Ovary (tissue), 10 donors: ENCODE measurements at regions of chr9 and their contacts with region 1.

Region 1: GRCh38 chr9:99184475-99185347 is 37.0 kb downstream of the ALG2 start:
- DNase-seq: peak; percentile 76 to 89 (median 88)
- H3K4me3 ChIP-seq: peak overlapping the region; percentile 21
- H3K27ac ChIP-seq: no peak overlapping the region
- H3K4me1 ChIP-seq: peaks cover 3% of the 10 kb centered on the region
- H3K27me3 ChIP-seq: no peaks in the 10 kb centered on the region
- CTCF ChIP-seq: peak; percentile 81 to 91 (median 83)
- EP300 ChIP-seq: no peak
- POLR2A ChIP-seq: no peak

Region 2: GRCh38 chr9:99109522-99109921 is 75.2 kb before region 1 on chr9:
- intact Hi-C with region 1: no loop called
- DNase-seq: no peak
- H3K4me3 ChIP-seq: no peak overlapping the region
- H3K27ac ChIP-seq: no peak overlapping the region
- H3K4me1 ChIP-seq: peaks cover 11% of the 10 kb centered on the region
- H3K27me3 ChIP-seq: no peaks in the 10 kb centered on the region
- CTCF ChIP-seq: no peak
- EP300 ChIP-seq: no peak
- POLR2A ChIP-seq: no peak

Region 3: GRCh38 chr9:100322954-100323536 is 1138.3 kb after region 1 on chr9:
- intact Hi-C with region 1: loop called in 1 of 4 experiments (anchors 5 kb)
- DNase-seq: peak in 2 of 5 donors; percentile 32 to 33
- H3K4me3 ChIP-seq: no peak overlapping the region
- H3K27ac ChIP-seq: no peak overlapping the region
- H3K4me1 ChIP-seq: no peaks in the 10 kb centered on the region
- H3K27me3 ChIP-seq: no peaks in the 10 kb centered on the region
- CTCF ChIP-seq: peak in 2 of 3 donors; percentile 34 to 38
- EP300 ChIP-seq: no peak
- POLR2A ChIP-seq: no peak

Region 4: DNA sequence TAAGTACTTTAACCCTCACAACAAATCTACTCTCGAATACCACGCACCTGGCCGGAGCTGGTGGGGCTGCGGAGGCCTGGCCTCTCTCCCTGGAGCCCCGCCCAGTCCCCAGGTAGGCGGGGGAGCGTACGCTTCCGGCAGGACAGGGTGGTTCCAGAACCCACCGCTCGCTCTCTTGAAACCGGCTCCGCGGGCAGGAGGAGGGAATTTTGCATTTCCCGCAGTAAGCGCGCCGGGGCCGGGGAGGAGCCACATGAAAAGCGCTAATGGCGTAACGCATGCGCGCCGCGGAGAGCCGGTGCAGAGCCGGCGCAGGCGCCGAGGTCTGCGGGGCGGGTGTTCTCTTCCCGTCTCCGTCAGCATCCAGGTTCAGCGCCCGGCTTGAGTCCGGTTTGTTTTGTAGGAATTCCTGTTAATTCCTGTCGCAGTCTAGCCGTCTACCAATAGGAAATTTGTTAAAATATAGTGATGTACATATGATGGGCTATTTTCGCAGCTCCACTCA is 1414.0 kb after region 1 on chr9:
- intact Hi-C with region 1: loop called in 1 of 4 experiments (anchors 10 kb)
- DNase-seq: peak; percentile 72 to 89 (median 82)
- H3K4me3 ChIP-seq: peak overlapping the region; percentile 26
- H3K27ac ChIP-seq: no peak overlapping the region
- H3K4me1 ChIP-seq: peaks cover 3% of the 10 kb centered on the region
- H3K27me3 ChIP-seq: no peaks in the 10 kb centered on the region
- CTCF ChIP-seq: no peak
- EP300 ChIP-seq: no peak
- POLR2A ChIP-seq: no peak